ENCODE measurements at regions of chr14 and their contacts with region 1.

Region 1: GRCh38 chr14:77053046-77053841 is 24.7 kb upstream of the IRF2BPL start:
- DNase-seq: peak; percentile 63
- H3K4me3 Mint-ChIP-seq: no peak overlapping the region
- H3K27ac Mint-ChIP-seq: peak overlapping the region; percentile 90
- H3K4me1 Mint-ChIP-seq: peaks cover 15% of the 10 kb centered on the region
- H3K27me3 Mint-ChIP-seq: no peaks in the 10 kb centered on the region
- CTCF ChIP-seq: peak; percentile 71

Region 2: DNA sequence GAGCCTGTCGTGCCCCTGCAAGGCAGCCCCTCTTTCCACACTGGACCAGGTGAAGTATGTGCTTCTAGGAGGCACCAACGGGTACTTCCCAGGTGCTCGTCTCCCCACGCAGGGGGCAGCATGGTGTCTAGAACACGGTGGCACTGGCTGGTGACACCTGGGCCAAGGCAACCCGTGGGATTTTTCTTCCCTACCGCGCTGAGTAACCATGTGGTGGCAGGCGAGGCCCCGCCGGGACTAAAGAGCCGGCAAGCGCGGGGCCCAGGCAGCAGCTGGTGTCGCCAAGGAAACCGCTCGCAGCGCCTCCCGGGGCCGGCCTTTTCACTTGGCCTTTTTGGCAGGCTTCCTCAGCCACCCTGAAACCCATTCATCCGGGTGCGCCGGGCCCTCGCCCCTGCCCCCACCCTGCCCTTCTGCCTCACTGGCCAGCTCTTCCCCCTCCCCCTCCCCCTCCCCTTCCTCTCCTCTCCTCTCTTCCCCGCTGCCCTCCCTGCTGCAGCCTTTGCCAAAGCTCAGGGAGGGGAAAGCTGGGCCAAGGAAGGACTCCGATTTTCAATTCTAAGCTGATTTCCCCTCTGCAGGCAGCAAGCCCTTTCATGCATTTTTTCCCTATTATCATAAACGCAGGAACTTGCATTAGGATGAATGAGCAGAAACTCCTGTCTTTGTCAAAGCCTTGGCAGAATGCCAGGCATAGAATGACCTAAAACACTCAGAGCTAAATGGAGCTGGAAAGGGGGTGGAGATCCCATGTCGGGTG is 106.0 kb before region 1 on chr14:
- CTCF ChIA-PET with region 1: interaction called, 5 read pairs
- POLR2A ChIA-PET with region 1: no interaction called
- intact Hi-C with region 1: loop called (anchors 1 kb)
- DNase-seq: peak; percentile 88
- H3K4me3 Mint-ChIP-seq: peak overlapping the region; percentile 31
- H3K27ac Mint-ChIP-seq: peak overlapping the region; percentile 94
- H3K4me1 Mint-ChIP-seq: peaks cover 28% of the 10 kb centered on the region
- H3K27me3 Mint-ChIP-seq: no peaks in the 10 kb centered on the region
- CTCF ChIP-seq: peak; percentile 31

Region 3: DNA sequence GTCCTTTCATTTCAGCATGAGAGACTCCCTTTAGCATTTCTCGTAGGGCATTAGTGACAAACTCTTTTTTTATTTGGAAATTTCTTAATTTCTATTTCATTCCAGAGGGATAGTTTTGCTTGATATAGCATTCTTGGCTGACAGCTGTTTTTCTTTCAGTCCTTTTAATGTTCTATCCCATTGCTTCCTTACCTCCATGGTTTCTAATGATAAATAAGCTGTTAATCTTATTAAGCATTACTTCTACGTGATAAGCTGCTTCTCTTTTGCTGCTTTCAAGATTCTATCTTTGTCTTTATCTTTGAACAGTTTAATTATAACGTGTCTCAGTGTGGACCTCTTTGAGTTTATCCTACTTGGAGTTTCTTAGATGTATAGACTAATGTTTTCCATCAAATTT is 116.8 kb after region 1 on chr14:
- CTCF ChIA-PET with region 1: no interaction called
- POLR2A ChIA-PET with region 1: no interaction called
- intact Hi-C with region 1: no loop called
- DNase-seq: no peak
- H3K4me3 Mint-ChIP-seq: no peak overlapping the region
- H3K27ac Mint-ChIP-seq: no peak overlapping the region
- H3K4me1 Mint-ChIP-seq: no peaks in the 10 kb centered on the region
- H3K27me3 Mint-ChIP-seq: no peaks in the 10 kb centered on the region
- CTCF ChIP-seq: no peak

Region 4: DNA sequence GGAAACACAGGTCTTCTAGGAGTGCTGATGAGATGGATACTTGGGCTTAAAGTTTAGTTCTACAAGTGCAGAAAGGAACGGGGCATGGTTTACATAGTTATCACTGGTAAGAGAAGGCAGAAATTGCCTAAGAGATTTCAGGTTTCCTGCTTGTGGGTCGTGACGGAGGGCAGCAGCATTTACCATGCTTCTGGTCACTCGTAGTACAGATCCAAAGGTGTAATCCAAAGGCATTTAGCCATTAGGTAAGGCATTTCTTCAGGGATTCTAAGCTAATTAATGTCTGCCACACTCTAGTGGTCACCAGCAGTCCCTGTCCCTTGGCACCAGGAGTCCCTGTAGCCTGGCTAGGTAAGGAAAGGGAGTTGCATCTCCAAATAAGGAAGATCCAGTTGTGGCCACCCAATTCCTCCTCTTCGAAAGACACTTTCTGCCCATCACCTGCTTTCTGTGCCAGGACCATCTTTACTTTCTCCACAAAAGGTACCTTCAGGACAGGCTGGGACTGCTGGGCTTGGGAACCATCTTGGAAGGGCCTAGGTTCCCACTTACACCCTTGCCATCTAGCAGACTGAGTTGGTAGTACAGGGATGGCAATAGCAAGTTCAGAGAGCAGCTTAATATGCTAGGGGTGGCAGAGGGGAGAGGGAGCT is 269.1 kb after region 1 on chr14:
- CTCF ChIA-PET with region 1: no interaction called
- POLR2A ChIA-PET with region 1: no interaction called
- intact Hi-C with region 1: no loop called
- DNase-seq: no peak
- H3K4me3 Mint-ChIP-seq: peak overlapping the region; percentile 83
- H3K27ac Mint-ChIP-seq: no peak overlapping the region
- H3K4me1 Mint-ChIP-seq: peaks cover 18% of the 10 kb centered on the region
- H3K27me3 Mint-ChIP-seq: no peaks in the 10 kb centered on the region
- CTCF ChIP-seq: no peak

Measured in MCF 10A (cell line).